ENCODE measurements at regions of chr3 and their contacts with region 1.

Region 1: DNA sequence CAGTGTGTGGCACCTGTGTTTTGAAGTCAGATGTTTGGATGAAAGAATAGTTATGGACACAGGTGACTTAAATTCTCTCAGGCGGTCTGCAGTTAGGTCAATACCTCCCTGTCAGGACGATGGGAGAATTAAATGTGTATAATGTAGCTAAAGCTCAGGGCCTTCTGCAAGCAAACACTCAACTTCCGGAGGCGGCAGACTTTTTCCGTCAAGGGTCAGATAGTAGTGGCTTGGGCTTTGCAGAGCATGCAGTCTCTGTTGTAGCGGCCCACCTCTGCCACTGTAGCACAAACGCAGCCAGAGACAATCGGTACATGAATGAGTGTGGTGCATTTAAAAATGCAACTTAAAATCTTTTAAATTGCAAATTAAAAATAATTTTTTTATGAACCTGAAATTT is 47.4 kb downstream of the CMTM8 start:
- DNase-seq: no peak
- H3K4me3 Mint-ChIP-seq: no peak overlapping the region
- H3K27ac Mint-ChIP-seq: peak overlapping the region; percentile 65
- H3K4me1 Mint-ChIP-seq: peaks cover 29% of the 10 kb centered on the region
- H3K27me3 Mint-ChIP-seq: no peaks in the 10 kb centered on the region

Region 2: GRCh38 chr3:32302601-32303398 is 16.9 kb after region 1 on chr3:
- CTCF ChIA-PET with region 1: interaction called, 16 read pairs
- POLR2A ChIA-PET with region 1: interaction called, 13 read pairs
- DNase-seq: no peak
- H3K4me3 Mint-ChIP-seq: peak overlapping the region; percentile 46
- H3K27ac Mint-ChIP-seq: peak overlapping the region; percentile 94
- H3K4me1 Mint-ChIP-seq: peaks cover 45% of the 10 kb centered on the region
- H3K27me3 Mint-ChIP-seq: no peaks in the 10 kb centered on the region

Region 3: GRCh38 chr3:32354362-32354778 is 68.5 kb after region 1 on chr3:
- CTCF ChIA-PET with region 1: no interaction called
- POLR2A ChIA-PET with region 1: no interaction called
- DNase-seq: no peak
- H3K4me3 Mint-ChIP-seq: no peak overlapping the region
- H3K27ac Mint-ChIP-seq: no peak overlapping the region
- H3K4me1 Mint-ChIP-seq: no peaks in the 10 kb centered on the region
- H3K27me3 Mint-ChIP-seq: no peaks in the 10 kb centered on the region

Region 4: DNA sequence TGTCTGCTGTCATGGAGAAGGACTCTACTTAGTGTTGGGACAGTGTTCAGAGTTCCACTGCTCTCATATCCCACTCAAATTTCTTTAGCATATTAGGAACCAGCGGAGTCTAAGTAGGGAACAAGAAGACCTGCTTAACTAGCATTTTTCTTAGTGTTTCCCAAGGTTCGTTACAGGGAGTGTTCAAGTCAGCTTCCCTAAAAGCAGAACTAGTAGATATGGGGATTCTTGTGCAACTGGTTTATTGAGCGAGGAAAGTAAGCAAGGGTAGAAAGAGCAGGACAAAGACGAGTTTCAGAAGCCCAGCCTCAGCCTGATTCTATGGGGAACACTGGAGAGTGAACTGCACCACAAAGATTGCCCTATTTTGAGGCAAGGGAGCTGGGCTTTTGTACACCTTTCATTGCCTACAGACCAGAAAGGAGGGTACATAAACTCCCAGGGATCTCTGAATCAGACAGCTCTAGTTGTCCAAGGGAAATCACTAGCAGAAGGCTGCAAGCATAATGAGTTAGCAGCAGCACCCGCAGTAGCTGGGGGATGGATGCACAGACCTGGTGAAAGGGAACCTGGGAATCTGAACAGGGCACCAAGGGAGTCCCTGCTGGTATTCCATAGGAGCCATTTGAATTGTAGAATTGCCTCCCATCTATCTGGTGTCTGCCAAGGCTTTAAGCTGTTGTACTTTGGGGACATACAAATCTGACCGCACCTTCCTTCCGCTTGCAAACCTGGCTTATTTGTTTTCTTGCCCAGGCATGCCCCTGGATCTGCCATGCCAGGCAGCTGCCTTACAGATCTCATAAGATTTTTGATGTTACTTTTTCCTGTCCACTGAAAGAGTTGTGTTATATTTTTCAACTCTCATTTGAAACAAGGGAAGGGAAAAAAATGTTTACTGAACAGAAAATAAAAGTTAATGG is 120.9 kb after region 1 on chr3:
- CTCF ChIA-PET with region 1: no interaction called
- POLR2A ChIA-PET with region 1: no interaction called
- DNase-seq: no peak
- H3K4me3 Mint-ChIP-seq: no peak overlapping the region
- H3K27ac Mint-ChIP-seq: no peak overlapping the region
- H3K4me1 Mint-ChIP-seq: peaks cover 40% of the 10 kb centered on the region
- H3K27me3 Mint-ChIP-seq: no peaks in the 10 kb centered on the region

Measured in activated CD4-positive, alpha-beta memory T cell treated with anti-CD3 and anti-CD28 coated beads, Interleukin-2, amount 10 ng/mL, durations not matched to agents 7 days and 5 days (primary cell).